A549 (cell line): ENCODE measurements at regions of chr16 and their contacts with region 1.

Region 1: DNA sequence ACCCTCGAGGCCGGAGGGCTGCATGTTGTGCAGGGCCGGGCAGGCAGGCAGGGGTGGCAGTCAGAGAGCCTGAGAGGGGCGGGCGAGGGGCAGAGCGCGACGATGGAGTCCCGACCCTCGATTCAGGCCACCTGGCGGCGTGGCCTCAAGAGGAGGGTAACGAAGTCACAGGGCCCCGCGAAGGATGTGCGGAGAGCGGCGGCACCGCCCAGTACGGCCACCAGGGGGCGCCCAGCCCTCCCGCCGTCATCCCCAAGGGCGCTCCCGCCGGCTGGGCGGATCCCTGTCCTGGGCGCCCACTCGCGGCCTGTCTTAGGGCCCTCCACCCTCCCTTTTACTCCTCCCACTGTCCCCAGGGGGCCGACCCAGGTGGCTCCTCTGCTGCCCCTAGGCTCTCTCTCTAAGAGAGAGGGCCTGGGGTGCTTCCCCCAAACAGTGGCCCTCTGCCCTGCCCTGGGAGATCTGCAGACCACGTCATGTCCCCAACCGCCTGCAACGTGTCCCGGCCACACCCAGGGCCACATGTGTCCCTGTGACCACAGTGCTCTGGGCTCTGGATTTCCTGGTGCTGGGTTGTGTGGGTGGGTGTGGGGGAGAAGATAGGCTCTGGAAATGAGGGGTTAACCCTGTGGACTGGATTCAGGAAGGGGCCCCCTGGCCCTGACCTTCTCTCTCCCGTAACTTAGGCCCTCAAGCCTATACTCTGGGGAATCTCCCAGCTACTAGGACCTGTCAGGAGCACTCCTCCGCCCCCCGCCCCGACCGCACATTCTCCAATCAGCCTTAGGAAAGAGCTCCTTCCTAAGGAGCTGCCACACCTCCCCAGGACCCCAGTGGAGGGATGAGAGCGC is 5.9 kb downstream of the DPEP2 start:
- DNase-seq: peak; percentile 76 to 80
- ATAC-seq: peak; percentile 92 to 98
- H3K4me3 ChIP-seq: peak overlapping the region; percentile 20; the same call in 1 of the 3 replicates
- H3K27ac ChIP-seq: peak overlapping the region; percentile 66 to 82
- H3K4me1 ChIP-seq: peaks cover 5% of the 10 kb centered on the region; the same call in 1 of the 3 replicates
- CTCF ChIP-seq: peak; percentile 98
- EP300 ChIP-seq: no peak
- POLR2A ChIP-seq: no peak
- RAD21 ChIP-seq: peak; percentile 47 to 73; a peak in 4 of 5 replicates

Region 2: GRCh38 chr16:67883872-67884261 is 109.5 kb before region 1 on chr16:
- CTCF ChIA-PET with region 1: no interaction called
- POLR2A ChIA-PET with region 1: no interaction called
- DNase-seq: peak; percentile 59 to 92
- ATAC-seq: peak; percentile 16 to 92; a peak in 5 of 6 replicates
- H3K4me3 ChIP-seq: no peak overlapping the region
- H3K27ac ChIP-seq: no peak overlapping the region
- H3K4me1 ChIP-seq: peaks cover 9% of the 10 kb centered on the region; the same call in 1 of the 3 replicates
- CTCF ChIP-seq: peak; percentile 79
- EP300 ChIP-seq: no peak
- POLR2A ChIP-seq: no peak
- RAD21 ChIP-seq: peak; percentile 67 to 73

Region 3: DNA sequence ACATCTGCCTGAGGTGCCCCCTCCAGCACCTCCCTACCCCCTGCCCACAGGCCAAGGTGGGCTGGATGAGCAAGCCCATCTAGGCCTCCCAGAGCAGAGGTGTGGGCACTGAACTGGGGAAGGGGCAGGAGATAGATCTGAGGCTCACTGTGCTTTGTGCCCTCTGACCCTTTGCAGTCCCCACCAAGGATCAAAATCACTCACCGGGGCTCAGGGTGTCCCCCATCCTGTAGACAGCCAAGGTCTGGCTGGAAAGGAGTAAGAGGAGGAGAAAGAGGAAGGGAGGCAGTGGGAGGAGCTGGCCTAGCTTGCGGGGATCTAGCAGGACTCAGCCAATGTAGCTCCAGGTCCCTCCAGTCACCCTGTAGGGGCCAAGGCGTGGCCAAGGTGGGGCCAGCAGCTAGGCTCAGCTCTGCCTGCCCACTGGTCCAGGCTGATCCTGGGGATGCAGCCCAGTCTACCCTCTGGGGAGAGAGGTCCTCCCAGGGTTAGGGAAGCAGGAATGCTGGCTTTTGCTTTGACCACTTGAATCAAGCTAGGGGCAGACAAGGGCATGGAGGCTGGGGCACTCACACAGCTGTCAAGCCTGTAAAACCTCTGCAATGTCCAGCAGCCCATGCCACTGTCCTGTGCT is 26.7 kb before region 1 on chr16:
- CTCF ChIA-PET with region 1: interaction called, 11 read pairs
- POLR2A ChIA-PET with region 1: no interaction called
- DNase-seq: peak in 1 of 2 experiments; percentile 44
- ATAC-seq: peak in 1 of 2 experiments; percentile 51; a peak in 3 of 6 replicates
- H3K4me3 ChIP-seq: peak overlapping the region; percentile 95; the same call in 2 of the 3 replicates
- H3K27ac ChIP-seq: peak overlapping the region; percentile 58 to 95
- H3K4me1 ChIP-seq: peaks cover 25% of the 10 kb centered on the region
- CTCF ChIP-seq: no peak
- EP300 ChIP-seq: no peak
- POLR2A ChIP-seq: no peak
- RAD21 ChIP-seq: no peak

Region 4: GRCh38 chr16:67979955-67980678 is 13.3 kb before region 1 on chr16 and contains the start of gene DPEP3:
- CTCF ChIA-PET with region 1: interaction called, 14 read pairs
- POLR2A ChIA-PET with region 1: no interaction called
- DNase-seq: no peak
- ATAC-seq: no peak
- H3K4me3 ChIP-seq: no peak within 1 kb of the TSS
- H3K27ac ChIP-seq: no peak within 1 kb of the TSS
- H3K4me1 ChIP-seq: peaks cover 5% of the 10 kb centered on the region; the same call in 2 of the 3 replicates
- CTCF ChIP-seq: no peak
- EP300 ChIP-seq: no peak
- POLR2A ChIP-seq: no peak
- RAD21 ChIP-seq: no peak
- polyA plus RNA-seq, gene DPEP3: not detected in 2 replicates

Region 5: GRCh38 chr16:68013440-68013839 is 20.0 kb after region 1 on chr16:
- CTCF ChIA-PET with region 1: no interaction called
- POLR2A ChIA-PET with region 1: no interaction called
- DNase-seq: no peak
- ATAC-seq: 0 out of 6 replicates have a peak, but pooled peaks of 1 of the 2 experiments have one; percentile 23
- H3K4me3 ChIP-seq: no peak overlapping the region
- H3K27ac ChIP-seq: no peak overlapping the region
- H3K4me1 ChIP-seq: no peaks in the 10 kb centered on the region
- CTCF ChIP-seq: no peak
- EP300 ChIP-seq: no peak
- POLR2A ChIP-seq: no peak
- RAD21 ChIP-seq: no peak